CD4-positive, alpha-beta T cell (primary cell): ENCODE measurements at regions of chr21 and their contacts with region 1.

Region 1: GRCh38 chr21:14545906-14546480 is at the start of gene SAMSN1:
- DNase-seq: peak; percentile 47 to 91 (median 60)
- ATAC-seq: peak; percentile 83
- H3K4me3 ChIP-seq: peak within 1 kb of the TSS; percentile 70
- H3K4me3 Mint-ChIP-seq: peak within 1 kb of the TSS; percentile 92
- H3K27ac ChIP-seq: peak within 1 kb of the TSS; percentile 62 to 80
- H3K27ac Mint-ChIP-seq: peak within 1 kb of the TSS; percentile 87
- H3K4me1 ChIP-seq: peaks cover 27% of the 10 kb centered on the region
- H3K4me1 Mint-ChIP-seq: peaks cover 79% of the 10 kb centered on the region
- H3K27me3 ChIP-seq: no peaks in the 10 kb centered on the region
- H3K27me3 Mint-ChIP-seq: no peaks in the 10 kb centered on the region
- CTCF ChIP-seq: no peak
- total RNA-seq, gene SAMSN1: 51.2 to 51.3 TPM

Region 2: GRCh38 chr21:14086553-14086952 is 459.4 kb before region 1 on chr21:
- CTCF ChIA-PET with region 1: no interaction called
- POLR2A ChIA-PET with region 1: no interaction called
- intact Hi-C with region 1: no loop called
- DNase-seq: no peak
- ATAC-seq: no peak
- H3K4me3 ChIP-seq: no peak overlapping the region
- H3K4me3 Mint-ChIP-seq: no peak overlapping the region
- H3K27ac ChIP-seq: no peak overlapping the region
- H3K27ac Mint-ChIP-seq: no peak overlapping the region
- H3K4me1 ChIP-seq: no peaks in the 10 kb centered on the region
- H3K4me1 Mint-ChIP-seq: no peaks in the 10 kb centered on the region
- H3K27me3 ChIP-seq: no peaks in the 10 kb centered on the region
- H3K27me3 Mint-ChIP-seq: no peaks in the 10 kb centered on the region
- CTCF ChIP-seq: no peak

Region 3: DNA sequence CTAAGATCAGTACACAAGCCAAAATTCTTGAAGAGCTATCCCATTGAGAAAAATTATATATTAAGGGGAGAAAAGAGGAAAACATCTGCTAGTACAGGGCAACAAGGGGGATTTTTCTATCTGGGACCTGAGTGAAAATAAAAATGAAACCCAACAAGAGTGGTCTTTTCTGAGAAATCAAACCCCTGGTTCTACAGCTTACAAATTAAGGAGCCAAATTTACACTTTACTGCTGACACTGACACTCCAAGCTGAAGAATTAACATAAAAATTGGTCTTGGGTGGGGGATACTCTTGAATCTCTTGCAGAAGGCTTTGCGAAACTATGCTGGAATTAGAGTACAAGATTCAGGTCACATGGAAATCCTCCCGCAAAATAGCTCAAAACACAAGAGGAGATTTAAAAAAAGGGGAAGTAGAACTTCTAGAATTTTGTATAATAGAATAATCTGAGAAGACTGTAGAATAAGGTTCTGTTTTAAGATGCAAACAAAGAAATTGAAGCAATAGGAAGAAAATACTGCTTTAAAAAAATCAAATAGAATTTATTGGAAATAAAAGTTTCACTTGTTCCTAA is 131.0 kb before region 1 on chr21:
- CTCF ChIA-PET with region 1: no interaction called
- POLR2A ChIA-PET with region 1: no interaction called
- intact Hi-C with region 1: no loop called
- DNase-seq: no peak
- ATAC-seq: no peak
- H3K4me3 ChIP-seq: no peak overlapping the region
- H3K4me3 Mint-ChIP-seq: no peak overlapping the region
- H3K27ac ChIP-seq: no peak overlapping the region
- H3K27ac Mint-ChIP-seq: no peak overlapping the region
- H3K4me1 ChIP-seq: no peaks in the 10 kb centered on the region
- H3K4me1 Mint-ChIP-seq: no peaks in the 10 kb centered on the region
- H3K27me3 ChIP-seq: no peaks in the 10 kb centered on the region
- H3K27me3 Mint-ChIP-seq: peaks cover 29% of the 10 kb centered on the region
- CTCF ChIP-seq: no peak

Region 4: DNA sequence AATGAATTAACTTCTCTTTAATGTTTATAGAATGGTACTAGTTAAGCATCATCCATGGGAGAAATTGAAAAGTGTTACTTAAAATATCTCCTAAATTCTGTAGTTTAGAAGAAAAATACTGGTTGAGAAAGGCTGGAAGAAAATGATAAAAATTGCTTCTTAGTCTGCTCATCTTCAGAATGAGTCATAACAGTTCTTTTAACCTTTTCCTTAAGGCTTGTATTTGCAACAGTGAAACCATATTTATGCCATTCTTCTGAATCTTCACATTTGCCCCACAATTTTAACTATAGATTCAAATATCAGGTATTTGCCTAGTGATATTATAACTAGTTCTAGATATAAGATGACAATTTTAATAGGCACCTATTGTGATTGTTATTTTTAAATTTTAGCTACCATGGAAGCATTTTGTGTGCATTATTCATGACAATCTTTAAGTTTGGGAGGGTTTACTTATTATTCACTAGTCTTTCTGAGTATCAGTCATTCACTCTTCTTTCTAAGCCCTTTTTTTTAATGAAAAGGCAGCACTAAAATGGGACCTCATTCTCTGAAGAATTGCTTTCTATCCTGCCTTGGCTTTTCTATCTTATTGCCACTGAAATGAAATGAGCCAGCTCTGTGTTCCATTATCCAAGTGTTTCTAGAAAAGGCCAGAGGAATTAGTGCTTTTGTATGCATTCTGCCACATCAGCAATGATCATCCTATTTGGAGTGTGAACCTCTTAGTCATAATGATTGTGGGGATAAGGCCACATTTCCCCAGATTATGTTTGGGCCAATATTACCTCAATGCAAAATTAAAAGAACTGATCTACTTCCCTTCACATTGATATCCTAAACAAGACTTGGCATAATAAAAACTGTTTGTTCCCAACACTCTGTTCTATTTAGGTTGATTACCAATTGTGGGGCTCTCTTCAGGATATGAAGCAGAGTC is 58.2 kb before region 1 on chr21:
- CTCF ChIA-PET with region 1: no interaction called
- POLR2A ChIA-PET with region 1: no interaction called
- intact Hi-C with region 1: loop called in 1 of 2 experiments (anchors 5 kb)
- DNase-seq: no peak
- ATAC-seq: no peak
- H3K4me3 ChIP-seq: no peak overlapping the region
- H3K4me3 Mint-ChIP-seq: no peak overlapping the region
- H3K27ac ChIP-seq: no peak overlapping the region
- H3K27ac Mint-ChIP-seq: peak overlapping the region; percentile 60
- H3K4me1 ChIP-seq: peaks cover 5% of the 10 kb centered on the region
- H3K4me1 Mint-ChIP-seq: peaks cover 22% of the 10 kb centered on the region
- H3K27me3 ChIP-seq: no peaks in the 10 kb centered on the region
- H3K27me3 Mint-ChIP-seq: no peaks in the 10 kb centered on the region
- CTCF ChIP-seq: no peak

Region 5: DNA sequence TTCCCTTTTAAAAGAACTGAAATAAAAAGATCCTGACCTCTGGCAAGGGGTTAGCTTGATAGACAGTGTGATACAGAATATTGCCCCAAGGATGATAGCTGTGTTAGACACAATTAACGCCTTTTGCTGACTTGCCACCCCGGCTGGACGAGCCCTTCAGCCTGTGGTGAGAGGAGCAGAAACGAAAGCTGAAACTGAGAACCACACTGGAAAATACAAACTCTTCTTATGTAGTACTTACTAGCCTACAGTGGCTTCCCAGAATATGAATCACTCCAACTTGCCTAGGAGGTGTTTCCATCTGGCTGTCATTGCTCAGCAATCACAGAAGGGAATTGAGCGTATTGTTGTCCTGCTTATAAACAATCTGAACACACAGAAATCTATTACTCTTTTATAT is 22.8 kb before region 1 on chr21:
- CTCF ChIA-PET with region 1: no interaction called
- POLR2A ChIA-PET with region 1: interaction called, 6 read pairs
- intact Hi-C with region 1: loop called in 1 of 2 experiments (anchors 2 kb)
- DNase-seq: peak in 4 of 14 experiments; percentile 7 to 59 (median 50)
- ATAC-seq: peak; percentile 57
- H3K4me3 ChIP-seq: peak overlapping the region; percentile 17
- H3K4me3 Mint-ChIP-seq: peak overlapping the region; percentile 75
- H3K27ac ChIP-seq: no peak overlapping the region
- H3K27ac Mint-ChIP-seq: peak overlapping the region; percentile 35
- H3K4me1 ChIP-seq: peaks cover 25% of the 10 kb centered on the region
- H3K4me1 Mint-ChIP-seq: peaks cover 79% of the 10 kb centered on the region
- H3K27me3 ChIP-seq: no peaks in the 10 kb centered on the region
- H3K27me3 Mint-ChIP-seq: no peaks in the 10 kb centered on the region
- CTCF ChIP-seq: no peak

Region 6: DNA sequence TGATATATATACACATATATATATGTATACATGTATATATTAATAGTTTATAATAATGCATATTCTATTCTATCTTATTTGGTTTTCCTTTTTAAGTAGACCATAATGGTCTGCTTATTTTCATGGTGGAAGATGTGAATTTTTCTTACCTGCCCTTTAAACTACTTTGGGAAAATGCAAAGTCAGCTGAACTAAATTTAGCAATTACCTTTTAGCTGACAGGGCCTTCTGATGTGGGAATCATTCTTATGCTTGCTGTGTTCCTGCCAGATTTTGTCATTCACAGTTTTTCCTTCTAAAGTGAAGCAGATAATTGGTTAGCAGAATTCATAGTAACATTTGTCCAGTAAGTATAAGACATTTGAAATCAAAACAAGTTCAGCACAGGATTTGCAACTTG is 63.3 kb after region 1 on chr21:
- CTCF ChIA-PET with region 1: no interaction called
- POLR2A ChIA-PET with region 1: no interaction called
- intact Hi-C with region 1: no loop called
- DNase-seq: no peak
- ATAC-seq: no peak
- H3K4me3 ChIP-seq: no peak overlapping the region
- H3K4me3 Mint-ChIP-seq: no peak overlapping the region
- H3K27ac ChIP-seq: no peak overlapping the region
- H3K27ac Mint-ChIP-seq: no peak overlapping the region
- H3K4me1 ChIP-seq: no peaks in the 10 kb centered on the region
- H3K4me1 Mint-ChIP-seq: peaks cover 7% of the 10 kb centered on the region
- H3K27me3 ChIP-seq: no peaks in the 10 kb centered on the region
- H3K27me3 Mint-ChIP-seq: no peaks in the 10 kb centered on the region
- CTCF ChIP-seq: no peak

Region 7: GRCh38 chr21:14620152-14620551 is 74.2 kb after region 1 on chr21:
- CTCF ChIA-PET with region 1: no interaction called
- POLR2A ChIA-PET with region 1: no interaction called
- intact Hi-C with region 1: no loop called
- DNase-seq: peak in 1 of 14 experiments; percentile 11
- ATAC-seq: no peak
- H3K4me3 ChIP-seq: no peak overlapping the region
- H3K4me3 Mint-ChIP-seq: no peak overlapping the region
- H3K27ac ChIP-seq: no peak overlapping the region
- H3K27ac Mint-ChIP-seq: no peak overlapping the region
- H3K4me1 ChIP-seq: no peaks in the 10 kb centered on the region
- H3K4me1 Mint-ChIP-seq: no peaks in the 10 kb centered on the region
- H3K27me3 ChIP-seq: no peaks in the 10 kb centered on the region
- H3K27me3 Mint-ChIP-seq: no peaks in the 10 kb centered on the region
- CTCF ChIP-seq: no peak

Region 8: GRCh38 chr21:14675774-14676530 is 130.0 kb after region 1 on chr21:
- CTCF ChIA-PET with region 1: no interaction called
- POLR2A ChIA-PET with region 1: interaction called, 9 read pairs
- intact Hi-C with region 1: loop called (anchors 1 to 5 kb)
- DNase-seq: peak in 12 of 14 experiments; percentile 0 to 78 (median 16)
- ATAC-seq: peak; percentile 88
- H3K4me3 ChIP-seq: peak overlapping the region; percentile 4
- H3K4me3 Mint-ChIP-seq: peak overlapping the region; percentile 42
- H3K27ac ChIP-seq: peak overlapping the region; percentile 60 to 77
- H3K27ac Mint-ChIP-seq: peak overlapping the region; percentile 97
- H3K4me1 ChIP-seq: peaks cover 22% of the 10 kb centered on the region
- H3K4me1 Mint-ChIP-seq: peaks cover 50% of the 10 kb centered on the region
- H3K27me3 ChIP-seq: no peaks in the 10 kb centered on the region
- H3K27me3 Mint-ChIP-seq: no peaks in the 10 kb centered on the region
- CTCF ChIP-seq: no peak